PC-3 (cell line): ENCODE measurements at regions of chr1 and their contacts with region 1.

Region 1: DNA sequence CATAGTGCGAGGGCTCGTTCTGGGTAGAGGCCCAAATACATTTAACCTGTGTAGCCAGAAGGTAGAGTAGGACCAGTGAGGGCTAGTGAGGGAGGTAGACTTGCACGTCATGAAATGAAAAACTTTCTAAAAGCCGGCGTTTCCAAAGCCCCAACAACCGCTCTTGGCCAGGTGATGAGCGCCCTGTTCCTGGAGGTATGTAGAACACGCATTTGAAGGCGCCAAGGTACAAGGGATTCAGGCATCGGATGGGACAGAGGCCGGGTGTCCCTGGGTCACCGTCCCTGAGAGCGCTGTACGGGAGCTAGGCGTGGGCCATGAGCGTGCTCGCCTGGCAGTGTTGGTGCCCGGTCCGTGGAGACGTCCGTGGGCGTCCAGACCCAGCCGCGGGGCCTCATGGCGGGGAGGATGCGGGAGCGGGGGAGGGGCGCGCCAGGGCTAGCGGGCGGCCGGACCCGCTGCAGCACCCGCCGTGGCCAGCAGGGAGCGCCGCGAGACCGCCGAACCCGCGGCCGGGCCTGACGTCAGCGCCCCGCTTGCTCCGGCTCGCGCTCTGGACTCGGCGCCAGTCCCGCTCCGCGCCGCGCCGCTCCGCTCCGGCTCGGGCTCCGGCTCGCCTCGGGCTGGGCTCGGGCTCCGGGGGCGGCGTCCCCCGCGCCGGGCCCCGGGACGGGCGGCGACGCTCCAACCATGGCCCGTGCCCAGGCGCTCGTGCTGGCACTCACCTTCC is at the start of gene PTPRU:
- DNase-seq: peak; percentile 80
- ATAC-seq: peak; percentile 52
- H3K4me3 ChIP-seq: peak within 1 kb of the TSS; percentile 90
- H3K27ac ChIP-seq: no peak within 1 kb of the TSS
- H3K4me1 ChIP-seq: peaks cover 24% of the 10 kb centered on the region
- H3K27me3 ChIP-seq: no peaks in the 10 kb centered on the region
- CTCF ChIP-seq: peak; percentile 56
- total RNA-seq, gene PTPRU: 25.7 and 31.4 TPM in 2 replicates

Region 2: GRCh38 chr1:28581536-28582247 is 654.4 kb before region 1 on chr1:
- CTCF ChIA-PET with region 1: no interaction called
- POLR2A ChIA-PET with region 1: no interaction called
- intact Hi-C with region 1: no loop called
- DNase-seq: peak; percentile 95
- ATAC-seq: peak; percentile 94
- H3K4me3 ChIP-seq: peak overlapping the region; percentile 99
- H3K27ac ChIP-seq: peak overlapping the region; percentile 66
- H3K4me1 ChIP-seq: peaks cover 15% of the 10 kb centered on the region
- H3K27me3 ChIP-seq: no peaks in the 10 kb centered on the region
- CTCF ChIP-seq: 0 out of 2 replicates have a peak, but pooled peaks have one; percentile 7

Region 3: DNA sequence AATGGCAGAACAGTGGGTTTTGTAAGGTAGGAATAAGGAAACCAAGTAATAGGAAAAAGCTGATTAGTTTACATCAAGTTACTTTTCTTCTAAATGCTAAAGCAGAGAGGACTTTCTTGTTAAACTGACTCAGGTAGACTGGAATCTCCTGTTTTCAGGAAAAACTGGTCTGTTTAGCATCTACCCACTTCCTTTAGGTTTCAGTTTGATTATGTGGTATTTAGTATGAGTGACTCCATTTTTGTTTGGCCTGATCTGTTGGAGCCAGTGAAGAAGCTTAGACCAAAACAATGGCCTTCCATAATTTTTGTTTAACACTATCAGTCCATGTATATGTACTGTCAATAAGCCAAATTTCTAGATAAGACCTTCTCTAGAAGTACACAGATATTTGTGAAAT is 233.3 kb before region 1 on chr1:
- CTCF ChIA-PET with region 1: no interaction called
- POLR2A ChIA-PET with region 1: no interaction called
- intact Hi-C with region 1: no loop called
- DNase-seq: peak; percentile 85
- ATAC-seq: peak; percentile 76
- H3K4me3 ChIP-seq: no peak overlapping the region
- H3K27ac ChIP-seq: peak overlapping the region; percentile 16
- H3K4me1 ChIP-seq: peaks cover 32% of the 10 kb centered on the region
- H3K27me3 ChIP-seq: no peaks in the 10 kb centered on the region
- CTCF ChIP-seq: no peak

Region 4: DNA sequence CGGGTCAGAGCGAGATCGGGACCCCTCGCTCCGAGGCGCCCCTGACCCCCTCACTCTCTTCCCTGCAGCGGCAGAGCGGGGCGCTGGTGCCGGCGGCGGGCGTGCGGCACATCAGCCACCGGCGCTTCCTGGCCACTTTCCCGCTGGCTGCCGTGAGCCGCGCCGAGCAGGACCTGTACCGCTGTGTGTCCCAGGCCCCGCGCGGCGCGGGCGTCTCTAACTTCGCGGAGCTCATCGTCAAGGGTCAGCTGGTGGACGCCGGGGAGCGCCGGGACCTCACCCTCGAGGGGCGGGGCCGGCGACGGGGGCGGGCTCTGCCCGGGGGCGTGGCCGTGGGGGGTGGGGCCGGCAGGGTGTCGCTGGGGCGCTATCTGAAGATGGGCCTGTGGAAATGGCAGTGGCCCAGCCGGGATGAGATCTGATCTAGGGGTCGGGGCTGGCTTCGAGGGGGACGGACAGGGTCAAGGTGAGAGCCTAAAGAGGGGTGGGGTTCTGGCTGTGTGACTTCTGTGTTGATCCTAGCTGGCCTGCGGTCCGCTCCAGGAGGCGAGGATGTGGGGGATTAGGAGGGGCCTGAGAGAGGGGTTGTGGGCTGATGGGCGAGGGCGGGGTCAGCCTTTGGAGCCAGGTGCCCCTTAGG is 23.8 kb after region 1 on chr1:
- CTCF ChIA-PET with region 1: no interaction called
- POLR2A ChIA-PET with region 1: no interaction called
- intact Hi-C with region 1: loop called (anchors 2 kb)
- DNase-seq: no peak
- ATAC-seq: peak; percentile 81
- H3K4me3 ChIP-seq: peak overlapping the region; percentile 67
- H3K27ac ChIP-seq: no peak overlapping the region
- H3K4me1 ChIP-seq: peaks cover 10% of the 10 kb centered on the region; the same call in 1 of the 2 replicates
- H3K27me3 ChIP-seq: no peaks in the 10 kb centered on the region
- CTCF ChIP-seq: no peak

Region 5: GRCh38 chr1:29341936-29342335 is 105.8 kb after region 1 on chr1:
- CTCF ChIA-PET with region 1: no interaction called
- POLR2A ChIA-PET with region 1: no interaction called
- intact Hi-C with region 1: loop called (anchors 2 kb)
- DNase-seq: peak; percentile 17
- ATAC-seq: 0 out of 2 replicates have a peak, but pooled peaks have one; percentile 29
- H3K4me3 ChIP-seq: no peak overlapping the region
- H3K27ac ChIP-seq: no peak overlapping the region
- H3K4me1 ChIP-seq: no peaks in the 10 kb centered on the region
- H3K27me3 ChIP-seq: peaks cover 30% of the 10 kb centered on the region; the same call in 1 of the 2 replicates
- CTCF ChIP-seq: peak; percentile 51

Region 6: GRCh38 chr1:29465755-29466154 is 229.6 kb after region 1 on chr1:
- CTCF ChIA-PET with region 1: no interaction called
- POLR2A ChIA-PET with region 1: no interaction called
- intact Hi-C with region 1: no loop called
- DNase-seq: peak; percentile 46
- ATAC-seq: no peak
- H3K4me3 ChIP-seq: no peak overlapping the region
- H3K27ac ChIP-seq: no peak overlapping the region
- H3K4me1 ChIP-seq: no peaks in the 10 kb centered on the region
- H3K27me3 ChIP-seq: peaks cover 6% of the 10 kb centered on the region; the same call in 1 of the 2 replicates
- CTCF ChIP-seq: no peak

Region 7: DNA sequence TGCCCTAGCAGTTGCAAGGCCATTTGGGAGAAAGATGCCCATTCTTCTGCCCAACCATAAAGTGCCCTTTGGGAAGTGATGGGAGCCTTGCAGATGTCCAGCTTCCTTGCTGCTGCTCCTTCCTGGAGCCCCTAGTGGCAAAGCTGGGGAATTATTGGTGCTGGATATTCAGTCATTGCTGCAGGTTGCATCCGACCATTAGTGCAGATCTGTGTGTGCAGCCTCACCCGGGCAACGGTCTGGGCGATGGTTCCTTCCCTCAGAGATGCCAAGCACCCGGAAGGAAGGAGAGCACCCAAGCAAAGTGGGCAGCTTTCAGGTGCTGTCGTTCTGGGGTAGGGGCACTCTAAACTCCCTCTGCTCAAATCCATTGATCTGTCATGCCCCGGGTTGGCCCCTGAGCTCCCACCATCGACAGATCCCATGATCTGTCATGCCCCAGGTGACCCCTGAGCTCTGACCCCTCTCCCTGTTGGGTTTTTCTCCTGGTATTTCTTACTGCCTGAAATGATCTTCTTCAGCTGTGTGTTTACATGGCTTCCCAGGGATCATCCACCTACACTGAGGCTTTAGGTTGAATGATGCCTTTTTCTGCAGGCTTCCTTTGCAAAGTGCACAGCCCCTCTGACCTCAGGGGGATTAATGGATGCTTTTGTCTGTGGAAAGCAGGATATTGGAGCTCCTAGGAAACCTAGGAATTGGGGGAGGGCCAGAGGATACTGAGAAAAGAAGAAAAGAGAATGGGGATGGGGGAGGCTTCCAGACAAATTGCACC is 467.7 kb after region 1 on chr1:
- CTCF ChIA-PET with region 1: no interaction called
- POLR2A ChIA-PET with region 1: no interaction called
- intact Hi-C with region 1: loop called (anchors 5 kb)
- DNase-seq: peak; percentile 59
- ATAC-seq: peak; percentile 54
- H3K4me3 ChIP-seq: no peak overlapping the region
- H3K27ac ChIP-seq: no peak overlapping the region
- H3K4me1 ChIP-seq: peaks cover 13% of the 10 kb centered on the region
- H3K27me3 ChIP-seq: no peaks in the 10 kb centered on the region
- CTCF ChIP-seq: peak; percentile 78

Region 8: GRCh38 chr1:30379684-30380624 is 1143.8 kb after region 1 on chr1:
- CTCF ChIA-PET with region 1: interaction called, 3 read pairs
- POLR2A ChIA-PET with region 1: no interaction called
- intact Hi-C with region 1: loop called (anchors 5 kb)
- DNase-seq: peak; percentile 78
- ATAC-seq: peak; percentile 80
- H3K4me3 ChIP-seq: no peak overlapping the region
- H3K27ac ChIP-seq: no peak overlapping the region
- H3K4me1 ChIP-seq: no peaks in the 10 kb centered on the region
- H3K27me3 ChIP-seq: peaks cover 12% of the 10 kb centered on the region; the same call in 1 of the 2 replicates
- CTCF ChIP-seq: peak; percentile 78